ENCODE measurements at regions of chr10 and their contacts with region 1.

Region 1: GRCh38 chr10:11113156-11113555 is 95.5 kb downstream of the CELF2 start:
- DNase-seq: no peak
- H3K4me3 ChIP-seq: no peak overlapping the region
- H3K27ac ChIP-seq: no peak overlapping the region
- H3K4me1 ChIP-seq: no peaks in the 10 kb centered on the region
- H3K27me3 ChIP-seq: no peaks in the 10 kb centered on the region
- CTCF ChIP-seq: peak in 2 of 3 experiments; percentile 9 to 24; a peak in 2 of 4 replicates
- EP300 ChIP-seq: no peak
- POLR2A ChIP-seq: no peak
- RAD21 ChIP-seq: peak; percentile 40 to 46

Region 2: DNA sequence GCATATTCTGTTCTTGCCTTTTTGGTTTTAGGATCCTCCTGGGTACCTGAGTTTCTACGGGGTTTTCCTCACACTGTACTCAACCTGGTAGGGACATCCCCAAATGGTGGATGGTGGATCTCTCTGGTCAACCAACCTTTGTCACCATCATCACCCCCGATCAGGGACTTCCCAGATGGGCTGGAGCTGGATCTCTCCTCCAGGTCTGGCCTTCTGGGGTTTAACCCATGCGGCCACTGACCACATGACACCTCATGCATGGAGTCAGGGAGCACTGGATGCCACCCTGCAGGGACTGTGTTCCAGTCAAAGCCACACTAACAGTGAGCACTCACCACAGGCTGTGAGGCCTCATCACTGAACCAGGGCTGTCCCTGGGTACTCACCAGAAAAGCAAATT is 15.5 kb before region 1 on chr10:
- CTCF ChIA-PET with region 1: interaction called, 20 read pairs
- POLR2A ChIA-PET with region 1: no interaction called
- DNase-seq: no peak
- H3K4me3 ChIP-seq: no peak overlapping the region
- H3K27ac ChIP-seq: no peak overlapping the region
- H3K4me1 ChIP-seq: peaks cover 9 to 20% (median 15%) of the 10 kb centered on the region in 4 experiments
- H3K27me3 ChIP-seq: no peaks in the 10 kb centered on the region
- CTCF ChIP-seq: no peak
- EP300 ChIP-seq: no peak
- POLR2A ChIP-seq: no peak
- RAD21 ChIP-seq: no peak

Region 3: GRCh38 chr10:11270135-11270857 is 157.1 kb after region 1 on chr10:
- CTCF ChIA-PET with region 1: interaction called, 12 read pairs
- POLR2A ChIA-PET with region 1: no interaction called
- DNase-seq: peak; percentile 86 to 95
- H3K4me3 ChIP-seq: no peak overlapping the region
- H3K27ac ChIP-seq: no peak overlapping the region
- H3K4me1 ChIP-seq: peaks cover 0 to 5% (median 1%) of the 10 kb centered on the region in 4 experiments; a peak in 3 of 7 replicates
- H3K27me3 ChIP-seq: no peaks in the 10 kb centered on the region
- CTCF ChIP-seq: peak; percentile 95 to 99 (median 99)
- EP300 ChIP-seq: no peak
- POLR2A ChIP-seq: no peak
- RAD21 ChIP-seq: peak; percentile 98 to 99

Region 4: DNA sequence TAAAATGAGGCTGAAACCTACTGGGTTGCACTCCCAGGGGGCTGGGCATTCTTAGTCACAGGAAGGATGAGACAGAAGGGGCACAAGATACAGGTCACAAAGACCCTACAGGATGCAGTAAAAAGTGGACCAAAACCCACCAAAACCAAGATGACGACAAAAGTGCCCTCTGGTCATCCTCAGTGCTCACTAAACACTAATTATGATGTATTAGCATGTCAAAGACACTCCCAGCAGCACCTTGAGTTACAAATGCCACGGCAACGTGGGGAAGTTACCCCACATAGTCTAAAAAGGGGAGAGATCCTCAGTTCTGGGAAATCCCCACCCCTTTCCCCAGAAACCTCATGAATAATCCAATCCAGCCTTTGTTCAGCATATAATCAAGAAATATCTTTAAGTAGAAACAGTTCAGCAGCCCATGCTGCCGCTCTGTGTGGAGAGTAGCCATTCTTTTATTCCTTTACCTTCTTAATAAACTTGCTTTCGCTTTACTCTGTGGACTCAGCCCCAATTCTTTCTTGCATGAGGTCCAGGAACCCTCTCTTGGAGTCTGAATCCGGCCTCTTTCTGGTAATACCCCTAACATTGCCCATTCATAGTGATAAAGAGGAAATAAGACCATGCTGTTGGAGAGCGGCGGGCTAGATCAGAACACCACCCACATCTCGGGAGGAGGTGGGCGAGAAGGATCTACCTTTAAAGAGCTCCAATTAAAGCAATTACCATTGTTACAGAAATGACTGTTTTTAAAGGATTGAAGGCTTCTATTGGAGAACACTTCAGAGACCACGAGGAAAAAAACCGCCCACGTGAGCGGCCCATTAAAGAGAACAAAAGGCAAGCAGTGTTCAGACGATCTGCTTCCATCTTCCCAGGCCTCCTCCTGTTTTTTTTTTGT is 327.3 kb after region 1 on chr10:
- CTCF ChIA-PET with region 1: no interaction called
- POLR2A ChIA-PET with region 1: no interaction called
- DNase-seq: peak in 1 of 2 experiments; percentile 38
- H3K4me3 ChIP-seq: no peak overlapping the region
- H3K27ac ChIP-seq: no peak overlapping the region
- H3K4me1 ChIP-seq: peaks cover 10 to 25% (median 17%) of the 10 kb centered on the region in 4 experiments
- H3K27me3 ChIP-seq: no peaks in the 10 kb centered on the region
- CTCF ChIP-seq: no peak
- EP300 ChIP-seq: no peak
- POLR2A ChIP-seq: no peak
- RAD21 ChIP-seq: no peak

Measured in H1 (cell line).